ENCODE measurements at regions of chr14 and their contacts with region 1.

Region 1: DNA sequence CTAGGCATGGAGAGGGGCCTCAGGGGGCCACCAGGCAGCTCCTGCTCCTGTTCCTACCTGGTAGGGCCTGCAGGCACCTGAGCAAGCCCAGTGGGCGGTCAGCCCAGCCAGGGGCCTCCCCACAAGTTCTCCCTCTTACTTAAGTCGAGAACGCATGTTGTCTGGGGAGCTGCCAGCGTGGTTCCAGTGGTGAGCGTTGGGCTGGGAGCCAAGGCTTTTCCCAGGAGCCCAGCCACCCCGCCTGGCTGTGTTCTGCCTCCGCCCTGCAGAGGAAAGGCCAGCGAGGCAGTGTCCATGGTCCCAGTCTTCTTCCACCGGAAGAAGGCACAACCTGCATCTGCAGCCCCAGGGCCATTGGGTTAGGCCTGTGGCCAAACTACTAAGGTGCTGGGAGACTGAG is 1.4 kb downstream of the C14orf180 start:
- DNase-seq: peak; percentile 83
- H3K4me3 ChIP-seq: no peak overlapping the region
- H3K27ac ChIP-seq: peak overlapping the region in 1 of 2 experiments; percentile 81; a peak in 2 of 4 replicates
- H3K4me1 ChIP-seq: peaks cover 0 to 95% of the 10 kb centered on the region in 2 experiments; a peak in 1 of 4 replicates
- H3K27me3 ChIP-seq: no peaks in the 10 kb centered on the region
- CTCF ChIP-seq: no peak
- EP300 ChIP-seq: 0 out of 4 replicates have a peak, but pooled peaks of 1 of the 2 experiments have one; percentile 18
- RAD21 ChIP-seq: no peak

Region 2: GRCh38 chr14:104545151-104545941 is 35.6 kb before region 1 on chr14:
- CTCF ChIA-PET with region 1: no interaction called
- POLR2A ChIA-PET with region 1: no interaction called
- DNase-seq: no peak
- H3K4me3 ChIP-seq: no peak overlapping the region
- H3K27ac ChIP-seq: no peak overlapping the region
- H3K4me1 ChIP-seq: no peaks in the 10 kb centered on the region; a peak in 2 of 4 replicates
- H3K27me3 ChIP-seq: no peaks in the 10 kb centered on the region
- CTCF ChIP-seq: no peak
- EP300 ChIP-seq: no peak
- RAD21 ChIP-seq: no peak

Region 3: DNA sequence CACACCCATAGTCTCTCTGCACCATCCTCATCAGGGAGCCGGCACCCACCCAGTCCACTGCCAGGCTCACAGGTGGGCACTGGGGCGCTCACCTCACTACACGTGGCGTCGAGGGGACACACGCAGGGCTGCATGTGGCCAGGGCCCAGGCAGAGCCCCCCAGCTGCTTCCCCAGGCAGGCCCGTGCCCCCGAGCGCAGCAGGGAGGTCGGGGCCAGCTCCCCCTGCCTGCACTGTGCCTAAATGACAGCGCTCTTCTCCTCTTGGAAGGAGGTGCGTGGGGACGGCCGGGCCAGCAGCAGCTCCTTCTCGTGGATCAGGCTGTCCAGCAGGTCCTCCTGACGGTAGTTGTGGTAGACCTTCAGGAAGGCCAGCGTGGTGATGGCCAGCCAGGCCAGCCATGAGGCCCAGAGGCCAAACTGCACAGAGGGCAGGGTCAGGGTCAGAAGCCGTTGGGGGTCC is 12.3 kb after region 1 on chr14:
- CTCF ChIA-PET with region 1: interaction called, 16 read pairs
- POLR2A ChIA-PET with region 1: interaction called, 4 read pairs
- DNase-seq: peak; percentile 59
- H3K4me3 ChIP-seq: no peak overlapping the region
- H3K27ac ChIP-seq: peak overlapping the region in 1 of 2 experiments; percentile 51; a peak in 2 of 4 replicates
- H3K4me1 ChIP-seq: peaks cover 0 to 81% of the 10 kb centered on the region in 2 experiments; a peak in 1 of 4 replicates
- H3K27me3 ChIP-seq: no peaks in the 10 kb centered on the region
- CTCF ChIP-seq: no peak
- EP300 ChIP-seq: no peak
- RAD21 ChIP-seq: no peak

Measured in SK-N-SH (cell line).